GM12878 (cell line): ENCODE measurements at regions of chr16 and their contacts with region 1.

Region 1: DNA sequence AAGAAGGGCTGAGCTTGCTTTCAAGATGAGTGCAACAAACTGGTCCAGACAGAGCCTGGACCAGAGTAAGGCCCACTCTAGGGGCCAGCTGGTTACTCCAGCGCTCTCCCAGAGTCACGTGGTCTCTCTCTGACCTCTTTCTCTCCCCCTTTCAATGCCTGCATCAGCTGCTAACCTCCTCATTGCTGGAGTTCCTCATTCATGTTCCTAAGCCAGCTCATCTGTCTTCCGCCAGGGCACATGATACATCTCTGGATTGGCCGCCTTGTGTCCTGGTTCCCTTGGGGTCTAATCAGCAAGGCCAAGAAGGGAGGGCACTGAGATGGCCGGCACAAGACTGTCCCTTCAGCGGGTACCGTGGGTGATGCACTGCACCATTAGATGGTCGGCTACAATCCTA is 26.9 kb upstream of the ZFP90 start:
- DNase-seq: no peak
- ATAC-seq: no peak
- H3K4me3 ChIP-seq: no peak overlapping the region
- H3K27ac ChIP-seq: no peak overlapping the region
- H3K4me1 ChIP-seq: no peaks in the 10 kb centered on the region
- H3K27me3 ChIP-seq: no peaks in the 10 kb centered on the region; a peak in 2 of 4 replicates
- CTCF ChIP-seq: no peak
- EP300 ChIP-seq: no peak
- POLR2A ChIP-seq: no peak
- RAD21 ChIP-seq: no peak

Region 2: GRCh38 chr16:68382296-68382718 is 129.9 kb before region 1 on chr16:
- CTCF ChIA-PET with region 1: interaction called, 10 read pairs
- POLR2A ChIA-PET with region 1: no interaction called
- RAD21 ChIA-PET with region 1: no interaction called
- SMC1A ChIA-PET with region 1: interaction called, 3 read pairs
- in situ Hi-C with region 1: no loop called
- intact Hi-C with region 1: no loop called
- DNase-seq: no peak
- ATAC-seq: peak; percentile 88
- H3K4me3 ChIP-seq: no peak overlapping the region
- H3K27ac ChIP-seq: no peak overlapping the region
- H3K4me1 ChIP-seq: peaks cover 10% of the 10 kb centered on the region
- H3K27me3 ChIP-seq: no peaks in the 10 kb centered on the region; a peak in 1 of 4 replicates
- CTCF ChIP-seq: peak in 2 of 3 experiments; percentile 57 to 62; a peak in 4 of 6 replicates
- EP300 ChIP-seq: no peak
- POLR2A ChIP-seq: no peak
- RAD21 ChIP-seq: no peak

Region 3: DNA sequence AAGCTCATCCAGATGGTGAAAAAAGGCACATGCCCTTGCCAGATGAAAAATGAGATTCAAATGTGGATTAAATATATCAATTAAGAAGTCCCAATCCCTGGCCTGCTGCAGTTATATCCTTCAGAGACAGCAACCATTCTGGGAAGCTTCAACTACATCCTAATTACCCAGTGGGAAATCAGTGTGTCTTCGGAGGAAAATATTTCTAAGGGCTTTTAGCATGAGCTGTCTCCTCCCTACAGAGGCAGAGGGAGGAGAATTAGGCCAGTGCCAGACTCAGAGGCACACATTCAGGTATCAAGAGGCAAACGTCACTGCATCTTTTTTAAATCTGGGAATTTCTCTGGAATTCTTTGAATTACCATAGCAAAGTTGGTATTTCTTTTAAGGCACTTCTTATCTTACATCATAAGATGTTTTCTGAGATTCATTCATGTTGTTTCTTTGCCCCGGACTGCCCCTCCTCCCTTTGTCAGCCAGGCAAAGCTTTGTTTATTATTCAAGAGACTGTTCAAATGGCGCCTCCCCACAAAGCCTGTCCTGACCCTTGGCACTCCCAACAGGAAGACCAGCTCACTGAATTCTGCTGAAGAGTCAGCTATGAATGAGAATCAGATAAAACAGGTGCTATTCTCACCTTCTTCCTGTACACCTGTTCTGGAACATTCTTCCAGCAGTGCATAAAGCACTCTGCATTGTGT is 25.5 kb before region 1 on chr16:
- CTCF ChIA-PET with region 1: interaction called, 10 read pairs
- POLR2A ChIA-PET with region 1: no interaction called
- RAD21 ChIA-PET with region 1: no interaction called
- SMC1A ChIA-PET with region 1: interaction called, 3 read pairs
- in situ Hi-C with region 1: no loop called
- intact Hi-C with region 1: no loop called
- DNase-seq: no peak
- ATAC-seq: no peak
- H3K4me3 ChIP-seq: no peak overlapping the region
- H3K27ac ChIP-seq: no peak overlapping the region
- H3K4me1 ChIP-seq: peaks cover 11% of the 10 kb centered on the region
- H3K27me3 ChIP-seq: no peaks in the 10 kb centered on the region; a peak in 1 of 4 replicates
- CTCF ChIP-seq: no peak
- EP300 ChIP-seq: no peak
- POLR2A ChIP-seq: no peak
- RAD21 ChIP-seq: no peak